ENCODE measurements at regions of chr9 and their contacts with region 1.

Region 1: DNA sequence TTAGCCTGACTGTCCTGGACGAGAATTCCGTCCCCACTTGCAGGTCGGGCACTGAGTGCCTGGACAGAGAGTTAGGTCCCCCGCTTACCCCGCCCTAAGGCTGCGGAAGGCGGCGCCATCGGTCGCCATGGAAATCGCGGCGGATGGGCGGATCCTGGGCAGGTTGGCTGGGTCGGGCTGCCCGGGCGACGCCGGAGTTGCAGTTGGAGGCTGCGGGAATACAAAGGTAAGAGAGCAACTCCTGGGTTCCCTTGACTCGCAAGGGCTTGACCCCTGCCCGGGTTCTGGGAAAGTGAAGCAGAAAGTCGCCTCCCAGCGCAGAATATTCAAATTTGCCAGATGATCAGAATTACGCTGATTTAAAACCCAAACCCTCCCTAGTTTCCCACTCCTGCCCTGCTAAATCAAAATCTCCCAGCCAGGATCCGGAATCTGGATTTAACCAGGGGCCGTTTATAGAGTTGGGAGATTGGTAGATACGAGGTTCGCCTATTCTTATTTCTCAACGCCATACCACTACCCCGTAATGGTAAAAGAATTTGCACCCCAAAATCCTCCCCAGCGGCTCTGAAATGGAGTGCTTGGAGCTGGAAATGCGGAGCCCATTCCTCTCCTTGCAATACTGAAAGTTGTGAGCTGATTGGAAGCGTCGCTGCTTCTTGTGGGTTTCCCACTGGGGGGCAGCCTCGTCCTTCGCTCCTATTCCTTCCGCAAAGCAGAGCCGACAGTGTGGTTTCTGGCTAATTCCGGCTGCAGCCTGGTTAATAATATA is 156.4 kb upstream of the RASEF start:
- DNase-seq: peak; percentile 91

Region 2: DNA sequence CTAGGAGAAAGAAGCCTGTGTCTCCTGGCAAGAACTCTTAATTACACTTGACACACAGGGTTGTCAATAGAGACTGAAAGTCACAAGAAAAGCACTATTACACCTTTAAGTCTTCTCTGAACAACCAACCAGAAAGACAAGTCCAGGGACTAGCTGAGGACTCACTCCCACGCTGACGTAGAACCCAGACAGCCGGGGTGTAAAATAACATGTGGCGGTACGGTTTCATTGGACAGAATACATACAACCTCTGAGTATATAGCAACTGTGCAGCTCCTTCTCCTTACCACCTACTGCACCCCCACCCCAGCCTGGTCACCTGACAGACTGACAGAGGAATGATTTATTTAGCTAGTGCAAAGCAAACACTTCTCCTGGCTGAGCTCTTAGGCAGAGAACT is 53.0 kb before region 1 on chr9:
- intact Hi-C with region 1: no loop called
- DNase-seq: no peak

Region 3: GRCh38 chr9:83538172-83538889 is 319.0 kb after region 1 on chr9 and contains the start of gene FRMD3:
- intact Hi-C with region 1: loop called in 1 of 2 experiments (anchors 10 kb)
- DNase-seq: peak; percentile 93
- total RNA-seq, gene FRMD3: 5.1 TPM

Region 4: GRCh38 chr9:83744212-83744611 is 524.9 kb after region 1 on chr9:
- intact Hi-C with region 1: loop called in 1 of 2 experiments (anchors 10 kb)
- DNase-seq: no peak